ENCODE measurements at regions of chr6 and their contacts with region 1.

Region 1: GRCh38 chr6:63352587-63353285 is 33.0 kb upstream of the LGSN start:
- DNase-seq: peak; percentile 80 to 96 (median 95)
- H3K4me3 ChIP-seq: peak overlapping the region in 6 of 7 experiments; percentile 13 to 69 (median 40)
- H3K27ac ChIP-seq: no peak overlapping the region
- H3K4me1 ChIP-seq: peaks cover 11 to 23% (median 17%) of the 10 kb centered on the region in 4 experiments
- H3K27me3 ChIP-seq: no peaks in the 10 kb centered on the region

Region 2: DNA sequence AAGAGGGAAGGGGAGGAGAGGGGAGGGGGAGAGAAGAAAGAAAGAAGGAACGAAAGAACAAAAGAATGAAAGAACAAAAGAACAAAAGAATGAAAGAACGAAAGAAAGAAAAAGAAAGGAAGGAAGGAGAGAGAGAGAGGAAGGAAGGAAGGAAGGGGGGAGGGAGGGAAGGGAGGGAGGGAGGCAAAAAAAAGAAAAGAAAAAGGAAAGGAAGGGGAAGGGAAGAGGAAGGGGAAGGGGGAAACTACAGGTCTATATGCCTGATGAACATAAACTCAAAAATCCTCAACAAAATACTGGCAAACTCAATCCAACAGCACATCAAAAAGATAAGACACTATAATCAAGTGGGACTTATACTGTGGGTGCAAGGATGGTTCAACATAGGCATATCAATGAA is 19.3 kb before region 1 on chr6:
- CTCF ChIA-PET with region 1: no interaction called
- POLR2A ChIA-PET with region 1: no interaction called
- DNase-seq: no peak
- H3K4me3 ChIP-seq: no peak overlapping the region
- H3K27ac ChIP-seq: no peak overlapping the region
- H3K4me1 ChIP-seq: no peaks in the 10 kb centered on the region
- H3K27me3 ChIP-seq: peaks cover 0 to 1% (median 0%) of the 10 kb centered on the region in 5 experiments

Region 3: GRCh38 chr6:63598049-63599036 is 245.6 kb after region 1 on chr6:
- CTCF ChIA-PET with region 1: interaction called, 11 read pairs
- POLR2A ChIA-PET with region 1: no interaction called
- DNase-seq: peak; percentile 69 to 80 (median 78)
- H3K4me3 ChIP-seq: peak overlapping the region; percentile 38 to 94 (median 73)
- H3K27ac ChIP-seq: no peak overlapping the region
- H3K4me1 ChIP-seq: peaks cover 6 to 10% (median 8%) of the 10 kb centered on the region in 4 experiments
- H3K27me3 ChIP-seq: no peaks in the 10 kb centered on the region

Region 4: DNA sequence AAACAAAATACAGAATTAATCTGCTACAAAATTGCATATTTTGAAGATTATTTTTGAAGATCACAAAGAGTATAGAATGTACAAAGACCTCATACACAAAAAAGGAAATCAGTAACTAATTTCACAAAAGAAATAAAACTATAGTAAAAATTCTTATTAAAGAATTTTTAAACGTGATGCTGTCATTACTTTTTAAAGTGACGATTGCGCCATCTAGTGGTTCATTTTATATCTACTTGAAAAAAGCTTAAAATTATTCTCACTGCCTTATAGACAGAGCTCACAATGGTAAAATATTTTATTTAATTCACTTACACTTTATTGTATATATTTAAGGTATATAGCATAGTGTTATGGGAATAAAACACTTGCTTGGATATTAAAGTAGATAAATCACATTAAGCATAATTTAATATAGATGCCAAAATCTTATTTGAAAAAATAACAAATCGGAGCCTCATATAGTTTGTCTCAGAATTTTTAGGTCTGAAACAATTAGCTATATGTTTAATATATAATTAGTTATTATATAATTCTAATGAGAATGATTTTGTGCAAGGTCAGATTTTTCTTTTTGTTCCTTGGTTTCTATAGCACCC is 411.7 kb after region 1 on chr6:
- CTCF ChIA-PET with region 1: interaction called, 20 read pairs
- POLR2A ChIA-PET with region 1: no interaction called
- DNase-seq: peak; percentile 46 to 76 (median 67)
- H3K4me3 ChIP-seq: no peak overlapping the region
- H3K27ac ChIP-seq: no peak overlapping the region
- H3K4me1 ChIP-seq: no peaks in the 10 kb centered on the region
- H3K27me3 ChIP-seq: no peaks in the 10 kb centered on the region

Region 5: DNA sequence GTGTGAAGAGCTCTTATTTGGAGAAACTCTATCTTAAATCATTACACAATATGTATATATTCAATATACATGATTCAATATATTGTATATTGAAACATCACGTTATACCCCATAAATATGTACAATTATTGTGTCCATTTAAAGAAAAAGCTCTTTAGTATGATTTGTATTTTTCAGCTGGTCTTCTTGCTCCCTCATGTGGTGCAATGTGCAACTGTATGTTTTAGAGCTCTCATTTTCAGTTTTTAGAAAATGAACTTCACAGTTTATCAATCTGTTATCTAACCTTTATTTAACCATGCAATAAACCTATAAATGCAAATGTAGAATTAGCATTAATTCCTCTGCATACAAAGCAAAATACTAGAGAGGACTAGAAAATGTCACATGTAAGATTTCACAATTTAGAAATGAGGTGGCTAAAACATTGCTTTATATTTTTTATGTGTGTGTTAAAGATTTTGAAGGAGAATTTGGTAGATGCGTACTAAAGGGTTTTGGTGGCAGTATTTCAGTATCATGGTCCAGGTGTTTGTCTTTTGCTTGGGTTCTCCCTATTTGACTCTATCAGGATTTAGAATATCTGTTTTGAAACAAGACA is 450.0 kb after region 1 on chr6:
- CTCF ChIA-PET with region 1: interaction called, 16 read pairs
- POLR2A ChIA-PET with region 1: no interaction called
- DNase-seq: peak; percentile 24 to 64 (median 53)
- H3K4me3 ChIP-seq: no peak overlapping the region
- H3K27ac ChIP-seq: no peak overlapping the region
- H3K4me1 ChIP-seq: peaks cover 5 to 28% (median 19%) of the 10 kb centered on the region in 4 experiments
- H3K27me3 ChIP-seq: no peaks in the 10 kb centered on the region

Measured in common myeloid progenitor, CD34-positive (primary cell).